GM12878 (cell line): ENCODE measurements at regions of chr1 and their contacts with region 1.

Region 1: DNA sequence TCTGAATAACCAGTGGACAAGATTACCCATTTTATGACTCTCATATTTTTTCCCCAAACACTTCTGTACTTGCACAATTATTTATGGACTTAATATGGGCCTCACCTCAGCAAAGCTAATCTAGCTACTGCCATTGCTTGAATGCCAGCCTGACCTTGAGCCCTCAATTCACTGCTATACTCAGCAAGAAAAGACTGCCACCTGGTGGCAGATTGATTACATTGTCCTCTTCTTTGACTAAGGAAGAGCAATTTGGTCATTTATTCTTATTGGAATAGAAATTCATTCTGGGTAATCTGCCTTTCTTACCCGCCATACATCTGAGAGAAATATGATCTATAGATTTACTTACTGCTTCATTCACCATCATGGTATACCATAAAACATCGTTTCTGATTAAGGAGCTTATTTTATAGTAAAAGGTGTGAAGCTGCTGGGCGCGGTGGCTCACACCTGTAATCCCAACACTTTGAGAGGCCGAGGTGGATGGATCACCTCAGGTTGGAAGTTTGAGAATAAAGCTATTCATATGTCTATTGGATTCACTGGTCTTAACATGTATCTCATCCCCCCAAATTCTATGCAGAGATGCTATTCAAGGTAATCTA is 32.9 kb upstream of the DIPK1A start:
- DNase-seq: no peak
- ATAC-seq: peak; percentile 98
- H3K4me3 ChIP-seq: no peak overlapping the region
- H3K27ac ChIP-seq: no peak overlapping the region
- H3K4me1 ChIP-seq: no peaks in the 10 kb centered on the region
- H3K27me3 ChIP-seq: no peaks in the 10 kb centered on the region
- CTCF ChIP-seq: peak; percentile 65 to 81 (median 73)
- EP300 ChIP-seq: no peak
- POLR2A ChIP-seq: no peak
- RAD21 ChIP-seq: peak; percentile 100

Region 2: GRCh38 chr1:92709738-92710137 is 284.5 kb before region 1 on chr1:
- CTCF ChIA-PET with region 1: no interaction called
- POLR2A ChIA-PET with region 1: no interaction called
- RAD21 ChIA-PET with region 1: no interaction called
- SMC1A ChIA-PET with region 1: no interaction called
- in situ Hi-C with region 1: no loop called
- intact Hi-C with region 1: no loop called
- DNase-seq: no peak
- ATAC-seq: no peak
- H3K4me3 ChIP-seq: no peak overlapping the region
- H3K27ac ChIP-seq: no peak overlapping the region
- H3K4me1 ChIP-seq: no peaks in the 10 kb centered on the region
- H3K27me3 ChIP-seq: no peaks in the 10 kb centered on the region
- CTCF ChIP-seq: no peak
- EP300 ChIP-seq: no peak
- POLR2A ChIP-seq: no peak
- RAD21 ChIP-seq: no peak

Region 3: GRCh38 chr1:92831762-92832536 is 162.3 kb before region 1 on chr1 and contains the start of gene RPL5:
- CTCF ChIA-PET with region 1: interaction called, 14 read pairs
- POLR2A ChIA-PET with region 1: no interaction called
- RAD21 ChIA-PET with region 1: interaction called, 4 read pairs
- SMC1A ChIA-PET with region 1: interaction called, 4 read pairs
- in situ Hi-C with region 1: no loop called
- intact Hi-C with region 1: no loop called
- DNase-seq: peak; percentile 96
- ATAC-seq: peak; percentile 89
- H3K4me3 ChIP-seq: peak within 1 kb of the TSS; percentile 97
- H3K27ac ChIP-seq: peak within 1 kb of the TSS; percentile 95
- H3K4me1 ChIP-seq: no peaks in the 10 kb centered on the region
- H3K27me3 ChIP-seq: no peaks in the 10 kb centered on the region
- CTCF ChIP-seq: peak; percentile 95 to 99 (median 99); a peak in 5 of 6 replicates
- EP300 ChIP-seq: 0 out of 4 replicates have a peak, but pooled peaks of 1 of the 2 experiments have one; percentile 29
- POLR2A ChIP-seq: peak; percentile 100
- RAD21 ChIP-seq: peak; percentile 27; the same call in 1 of the 2 replicates
- polyA plus RNA-seq, gene RPL5: 5,267 to 6,047 TPM

Region 4: DNA sequence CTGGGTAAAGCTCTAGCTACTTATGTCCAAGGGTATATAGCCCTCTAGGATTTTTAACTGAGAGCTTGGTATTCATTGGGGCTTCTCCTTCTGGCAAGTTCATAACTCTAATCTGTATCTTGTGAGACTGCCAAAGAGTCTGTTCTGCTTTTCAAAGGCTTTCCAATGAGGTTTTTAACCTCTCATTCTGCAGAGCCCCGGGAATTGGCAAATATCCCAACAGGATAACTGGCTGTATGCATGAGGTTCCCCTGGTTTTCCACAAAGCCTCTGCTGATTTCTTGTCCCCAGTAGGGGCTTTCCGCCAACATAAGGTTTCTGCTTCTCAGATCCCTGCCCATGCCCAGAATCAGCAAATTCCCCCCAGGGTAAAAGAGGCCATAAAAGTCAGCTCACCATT is 121.5 kb before region 1 on chr1:
- CTCF ChIA-PET with region 1: interaction called, 17 read pairs
- POLR2A ChIA-PET with region 1: no interaction called
- RAD21 ChIA-PET with region 1: interaction called, 3 read pairs
- SMC1A ChIA-PET with region 1: interaction called, 5 read pairs
- in situ Hi-C with region 1: no loop called
- intact Hi-C with region 1: no loop called
- DNase-seq: no peak
- ATAC-seq: no peak
- H3K4me3 ChIP-seq: no peak overlapping the region
- H3K27ac ChIP-seq: no peak overlapping the region
- H3K4me1 ChIP-seq: no peaks in the 10 kb centered on the region; the same call in 1 of the 2 replicates
- H3K27me3 ChIP-seq: no peaks in the 10 kb centered on the region
- CTCF ChIP-seq: no peak
- EP300 ChIP-seq: no peak
- POLR2A ChIP-seq: no peak
- RAD21 ChIP-seq: no peak

Region 5: GRCh38 chr1:92944901-92945747 is 49.1 kb before region 1 on chr1:
- CTCF ChIA-PET with region 1: interaction called, 20 read pairs
- POLR2A ChIA-PET with region 1: no interaction called
- RAD21 ChIA-PET with region 1: interaction called, 10 read pairs
- SMC1A ChIA-PET with region 1: interaction called, 19 read pairs
- in situ Hi-C with region 1: no loop called
- intact Hi-C with region 1: no loop called
- DNase-seq: no peak
- ATAC-seq: peak; percentile 73
- H3K4me3 ChIP-seq: peak overlapping the region; percentile 22; the same call in 1 of the 2 replicates
- H3K27ac ChIP-seq: peak overlapping the region; percentile 3
- H3K4me1 ChIP-seq: peaks cover 29% of the 10 kb centered on the region
- H3K27me3 ChIP-seq: no peaks in the 10 kb centered on the region
- CTCF ChIP-seq: no peak
- EP300 ChIP-seq: no peak
- POLR2A ChIP-seq: no peak
- RAD21 ChIP-seq: no peak

Region 6: DNA sequence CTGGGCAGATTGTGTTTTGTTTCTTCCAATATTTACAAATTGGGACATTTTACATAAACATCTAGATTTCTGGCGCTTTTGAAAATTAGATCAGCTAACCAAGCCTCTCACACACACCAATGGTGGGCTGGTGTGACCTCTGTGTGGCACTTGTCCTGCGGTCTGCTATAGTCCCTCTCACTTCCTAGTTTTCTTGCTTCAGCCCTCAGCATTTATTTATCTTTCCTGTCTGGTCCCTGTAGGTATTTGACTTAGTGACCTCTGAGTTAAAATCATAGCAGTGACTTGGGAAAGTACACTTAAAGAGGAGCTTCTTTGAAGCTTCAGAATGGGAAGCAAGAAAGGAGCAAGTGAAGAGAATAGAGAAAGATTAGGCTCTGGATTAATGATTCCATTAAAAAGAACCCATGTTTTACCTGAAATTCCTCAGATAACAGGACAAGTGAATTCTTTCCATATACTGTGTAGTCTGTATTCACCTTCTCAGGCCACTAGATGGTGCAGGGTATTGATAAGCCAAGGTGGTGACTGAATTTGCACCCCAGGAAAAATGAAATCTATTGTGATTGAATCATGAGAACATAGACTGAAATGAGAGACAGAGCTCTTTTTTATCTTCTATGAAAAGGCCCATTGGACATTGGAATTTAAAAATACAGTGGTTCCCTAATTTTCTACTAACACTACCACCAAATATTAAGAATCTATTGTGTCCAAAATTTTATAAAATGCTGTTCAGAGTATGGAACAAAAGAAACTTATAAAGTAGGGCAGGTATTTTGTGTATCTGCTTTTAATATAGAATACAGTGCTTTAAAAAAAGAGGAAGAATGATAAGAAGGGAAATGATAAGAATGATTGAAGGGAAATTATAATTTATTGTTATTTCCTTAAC is 25.8 kb before region 1 on chr1:
- CTCF ChIA-PET with region 1: interaction called, 304 read pairs
- POLR2A ChIA-PET with region 1: interaction called, 5 read pairs
- RAD21 ChIA-PET with region 1: interaction called, 133 read pairs
- SMC1A ChIA-PET with region 1: interaction called, 253 read pairs
- in situ Hi-C with region 1: no loop called
- intact Hi-C with region 1: loop called (anchors 1 kb)
- DNase-seq: no peak
- ATAC-seq: peak; percentile 84
- H3K4me3 ChIP-seq: no peak overlapping the region
- H3K27ac ChIP-seq: no peak overlapping the region
- H3K4me1 ChIP-seq: peaks cover 30% of the 10 kb centered on the region
- H3K27me3 ChIP-seq: no peaks in the 10 kb centered on the region
- CTCF ChIP-seq: peak; percentile 72 to 81 (median 74)
- EP300 ChIP-seq: no peak
- POLR2A ChIP-seq: no peak
- RAD21 ChIP-seq: peak; percentile 89

Region 7: GRCh38 chr1:93007941-93008577 is 13.8 kb after region 1 on chr1:
- CTCF ChIA-PET with region 1: interaction called, 41 read pairs
- POLR2A ChIA-PET with region 1: no interaction called
- RAD21 ChIA-PET with region 1: interaction called, 12 read pairs
- SMC1A ChIA-PET with region 1: interaction called, 27 read pairs
- in situ Hi-C with region 1: no loop called
- intact Hi-C with region 1: no loop called
- DNase-seq: no peak
- ATAC-seq: no peak
- H3K4me3 ChIP-seq: no peak overlapping the region
- H3K27ac ChIP-seq: no peak overlapping the region
- H3K4me1 ChIP-seq: peaks cover under 1% of the 10 kb centered on the region; the same call in 1 of the 2 replicates
- H3K27me3 ChIP-seq: no peaks in the 10 kb centered on the region
- CTCF ChIP-seq: no peak
- EP300 ChIP-seq: no peak
- POLR2A ChIP-seq: no peak
- RAD21 ChIP-seq: no peak

Region 8: GRCh38 chr1:93061895-93062792 is 67.9 kb after region 1 on chr1:
- CTCF ChIA-PET with region 1: interaction called, 18 read pairs
- POLR2A ChIA-PET with region 1: no interaction called
- RAD21 ChIA-PET with region 1: interaction called, 12 read pairs
- SMC1A ChIA-PET with region 1: interaction called, 15 read pairs
- in situ Hi-C with region 1: no loop called
- intact Hi-C with region 1: no loop called
- DNase-seq: no peak
- ATAC-seq: peak; percentile 99
- H3K4me3 ChIP-seq: no peak overlapping the region
- H3K27ac ChIP-seq: no peak overlapping the region
- H3K4me1 ChIP-seq: no peaks in the 10 kb centered on the region
- H3K27me3 ChIP-seq: no peaks in the 10 kb centered on the region; a peak in 1 of 4 replicates
- CTCF ChIP-seq: peak; percentile 67 to 83 (median 72)
- EP300 ChIP-seq: no peak
- POLR2A ChIP-seq: no peak
- RAD21 ChIP-seq: peak; percentile 90